Aorta (tissue), 5 donors: ENCODE measurements at regions of chr10 and their contacts with region 1.

Region 1: DNA sequence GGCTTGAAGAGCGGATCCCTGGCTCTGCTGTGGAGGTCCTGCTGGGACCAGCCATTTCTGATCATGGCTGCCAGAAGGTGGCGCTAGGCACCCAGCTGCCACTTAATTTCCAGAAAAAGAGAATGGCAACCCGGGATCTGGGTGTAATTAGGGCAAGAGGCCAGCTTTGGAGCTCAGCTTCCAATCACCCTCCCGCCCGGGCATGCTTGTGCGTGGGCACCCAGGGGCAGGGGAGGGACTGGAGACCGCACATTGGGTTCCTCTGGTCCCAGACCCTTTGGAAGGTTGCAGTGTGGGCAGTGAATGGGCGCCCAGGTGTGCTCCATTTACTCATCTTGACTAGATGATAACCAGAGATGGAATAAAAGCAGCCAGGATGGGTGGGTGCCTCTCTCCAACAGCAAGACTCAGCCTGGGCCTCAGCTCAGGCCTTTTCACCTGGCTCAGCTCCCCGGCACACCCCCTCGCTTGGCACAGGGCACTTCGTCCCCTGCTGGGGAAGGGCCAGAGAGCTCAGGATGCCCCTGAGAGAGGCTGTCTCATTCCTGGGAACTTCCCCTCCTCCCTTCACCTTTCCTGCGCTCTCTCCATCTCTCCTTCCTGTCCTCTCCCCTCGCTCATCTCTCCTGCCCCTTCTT is 14.7 kb downstream of the FAM241B start:
- DNase-seq: peak; percentile 72 to 89
- ATAC-seq: peak; percentile 56
- H3K4me3 ChIP-seq: no peak overlapping the region
- H3K27ac ChIP-seq: no peak overlapping the region
- H3K4me1 ChIP-seq: no peaks in the 10 kb centered on the region
- H3K27me3 ChIP-seq: no peaks in the 10 kb centered on the region

Region 2: DNA sequence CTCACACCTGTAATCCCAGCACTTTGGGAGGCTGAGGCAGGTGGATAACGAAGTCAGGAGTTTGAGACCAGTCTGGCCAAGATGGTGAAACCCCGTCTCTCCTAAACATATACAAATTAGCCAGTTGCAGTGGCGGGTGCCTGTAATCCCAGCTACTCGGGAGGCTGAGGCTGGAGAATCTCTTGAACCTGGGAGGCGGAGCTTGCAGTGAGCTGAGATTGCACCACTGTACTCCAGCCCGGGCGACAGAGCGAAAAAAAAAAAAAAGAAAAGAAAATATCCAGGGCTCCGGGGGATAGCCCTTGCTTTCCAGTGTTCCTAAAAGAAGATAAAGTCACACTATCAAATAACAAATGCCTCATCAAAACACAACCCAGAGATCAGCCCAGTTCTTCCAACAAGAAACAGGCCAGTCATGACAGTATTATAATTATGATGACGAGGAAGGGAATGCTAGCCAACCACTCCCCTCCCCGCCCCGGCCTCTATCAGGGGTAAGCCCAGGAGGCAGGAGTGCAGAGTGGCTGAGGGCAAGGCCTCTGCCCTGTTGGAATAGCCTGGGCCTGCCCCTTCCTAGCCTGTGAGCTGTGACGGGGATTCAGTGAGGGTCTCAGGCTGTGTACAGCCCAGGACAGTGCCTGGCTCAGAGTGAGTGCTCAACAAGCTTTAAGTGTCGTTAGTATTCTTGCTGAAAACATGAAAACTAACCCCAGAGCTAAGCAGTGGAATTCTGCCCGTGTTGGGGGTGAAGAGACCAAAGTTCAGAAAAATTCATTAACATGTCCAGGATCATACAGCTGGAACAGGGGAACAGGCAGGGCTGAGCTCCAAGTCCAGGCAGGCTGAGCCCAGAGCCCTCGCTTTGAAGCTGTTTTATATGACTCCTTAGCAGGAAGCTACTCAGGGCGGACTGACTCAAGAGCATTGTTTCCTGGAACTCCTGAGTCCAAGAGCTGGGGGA is 39.5 kb after region 1 on chr10:
- intact Hi-C with region 1: loop called in 1 of 2 experiments (anchors 5 kb)
- DNase-seq: peak in 1 of 2 donors; percentile 65
- ATAC-seq: peak; percentile 70
- H3K4me3 ChIP-seq: no peak overlapping the region
- H3K27ac ChIP-seq: peak overlapping the region in 1 of 2 donors; percentile 77
- H3K4me1 ChIP-seq: no peaks in the 10 kb centered on the region
- H3K27me3 ChIP-seq: no peaks in the 10 kb centered on the region

Region 3: DNA sequence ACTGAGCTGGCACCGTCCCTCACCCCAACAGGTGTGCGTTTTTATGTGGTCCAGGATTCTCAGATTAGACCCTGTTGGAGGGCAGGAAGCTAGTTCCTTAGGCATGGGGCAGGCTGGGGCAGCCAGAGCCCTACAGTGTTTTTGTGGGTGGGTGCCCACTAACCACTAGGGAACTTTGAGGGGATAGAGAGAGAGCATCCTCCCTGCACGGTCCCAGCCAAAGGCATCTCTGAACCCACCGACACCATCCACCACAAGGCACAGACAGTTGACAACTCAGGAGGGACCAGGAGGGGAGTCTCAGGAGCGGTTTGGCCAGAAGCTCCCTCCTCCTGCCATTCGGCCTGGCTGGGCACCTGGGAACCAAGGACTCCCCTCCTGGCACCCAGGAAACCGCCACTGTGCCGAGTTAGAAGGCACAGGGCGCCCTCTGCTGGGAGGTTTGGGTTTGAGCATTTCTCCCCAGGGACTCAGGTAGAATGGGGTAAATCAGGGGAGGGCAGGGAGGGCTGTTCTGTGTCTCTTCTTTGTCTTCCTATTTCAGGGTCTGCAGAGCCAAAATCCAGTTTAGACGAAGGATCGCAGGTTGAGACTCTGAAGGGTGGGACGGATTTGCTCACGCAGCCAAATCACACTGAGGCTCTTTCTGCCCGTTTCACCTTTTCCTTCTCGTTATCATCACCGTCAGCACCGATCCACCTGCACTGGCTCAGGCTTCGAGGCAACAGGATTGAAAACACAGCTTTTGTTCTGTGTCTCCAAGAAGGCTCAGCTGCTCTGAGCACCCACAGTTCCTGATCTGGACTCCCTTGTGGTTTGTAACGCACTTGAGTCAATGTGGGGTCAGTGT is 72.2 kb after region 1 on chr10:
- intact Hi-C with region 1: loop called (anchors 1 kb)
- DNase-seq: peak; percentile 67 to 84
- ATAC-seq: peak; percentile 42
- H3K4me3 ChIP-seq: no peak overlapping the region
- H3K27ac ChIP-seq: peak overlapping the region in 1 of 2 donors; percentile 94
- H3K4me1 ChIP-seq: no peaks in the 10 kb centered on the region
- H3K27me3 ChIP-seq: no peaks in the 10 kb centered on the region